GM13976 (cell line): ENCODE measurements at regions of chr21 and their contacts with region 1.

Region 1: DNA sequence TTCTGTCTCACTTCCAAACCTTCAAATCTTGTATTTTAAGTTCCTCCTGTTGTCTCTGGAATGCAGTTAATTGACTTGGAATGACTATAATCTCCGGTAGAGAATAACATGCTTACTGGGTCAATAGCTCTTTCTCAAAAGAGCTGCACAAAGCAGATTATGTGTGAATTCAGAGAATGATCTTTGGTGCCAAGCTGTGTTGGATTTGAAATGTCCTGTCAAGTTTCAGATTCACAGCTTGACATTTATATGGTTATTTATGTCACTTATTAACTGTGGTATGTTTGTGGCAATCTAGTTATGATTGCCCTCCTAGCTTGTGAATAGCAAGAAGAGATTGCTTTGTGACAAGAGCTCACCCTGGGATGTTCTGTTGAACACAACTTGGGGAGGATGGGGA is 128.3 kb upstream of the KCNE2 start:
- DNase-seq: no peak
- CTCF ChIP-seq: no peak

Region 2: DNA sequence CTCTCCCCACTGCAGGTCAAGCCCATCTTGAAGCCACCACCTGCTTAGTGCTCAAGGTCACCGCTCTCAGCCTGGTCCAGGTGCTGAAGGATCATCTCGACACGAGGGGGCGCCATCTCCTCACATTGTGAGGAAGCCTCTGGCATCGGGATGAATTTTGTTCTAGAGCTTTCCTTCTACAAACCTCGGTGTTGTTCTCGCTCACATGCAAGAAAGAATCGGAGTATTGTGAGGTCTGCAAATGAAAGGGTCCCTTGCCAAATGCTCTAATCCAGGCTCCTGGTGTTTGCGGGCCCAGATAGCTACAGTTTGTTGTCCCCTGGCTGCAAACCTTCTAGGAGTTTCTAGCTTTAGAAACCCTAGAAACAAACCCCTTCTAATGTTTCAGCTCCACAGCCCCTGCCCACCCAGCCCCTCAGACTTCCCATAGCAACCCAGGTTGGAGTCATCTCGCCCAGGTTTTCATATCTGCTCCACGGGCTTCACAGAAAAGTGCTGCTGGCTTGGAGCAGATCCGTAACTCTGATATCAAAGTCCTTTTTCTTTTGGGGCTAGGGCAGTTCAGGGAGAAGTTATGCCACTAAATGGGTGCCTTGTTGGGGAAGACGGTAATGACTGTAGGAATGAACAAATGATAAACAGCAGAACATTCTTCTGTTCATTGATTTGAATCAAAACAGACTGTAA is 311.3 kb before region 1 on chr21:
- in situ Hi-C with region 1: loop called (anchors 10 kb)
- DNase-seq: peak; percentile 77
- CTCF ChIP-seq: peak; percentile 73